B cell (primary cell): ENCODE measurements at regions of chr22 and their contacts with region 1.

Region 1: GRCh38 chr22:33018232-33018864 is 39.8 kb downstream of the SYN3 start:
- DNase-seq: peak; percentile 69
- ATAC-seq: peak; percentile 67
- H3K4me3 ChIP-seq: no peak overlapping the region
- H3K4me3 Mint-ChIP-seq: no peak overlapping the region
- H3K27ac ChIP-seq: no peak overlapping the region
- H3K27ac Mint-ChIP-seq: no peak overlapping the region
- H3K4me1 ChIP-seq: peaks cover 3 to 15% of the 10 kb centered on the region in 2 donors
- H3K4me1 Mint-ChIP-seq: peaks cover 9% of the 10 kb centered on the region
- H3K27me3 ChIP-seq: no peaks in the 10 kb centered on the region
- H3K27me3 Mint-ChIP-seq: no peaks in the 10 kb centered on the region
- CTCF ChIP-seq: peak; percentile 94

Region 2: GRCh38 chr22:33049119-33049729 is 30.9 kb after region 1 on chr22:
- CTCF ChIA-PET with region 1: interaction called, 31 read pairs
- POLR2A ChIA-PET with region 1: no interaction called
- intact Hi-C with region 1: loop called (anchors 1 kb)
- DNase-seq: peak; percentile 77
- ATAC-seq: peak; percentile 61
- H3K4me3 ChIP-seq: no peak overlapping the region
- H3K4me3 Mint-ChIP-seq: no peak overlapping the region
- H3K27ac ChIP-seq: no peak overlapping the region
- H3K27ac Mint-ChIP-seq: no peak overlapping the region
- H3K4me1 ChIP-seq: peaks cover 15 to 21% of the 10 kb centered on the region in 2 donors
- H3K4me1 Mint-ChIP-seq: peaks cover 17% of the 10 kb centered on the region
- H3K27me3 ChIP-seq: peaks cover 0 to 18% (median 10%) of the 10 kb centered on the region in 4 experiments
- H3K27me3 Mint-ChIP-seq: peaks cover 39% of the 10 kb centered on the region
- CTCF ChIP-seq: peak; percentile 99

Region 3: GRCh38 chr22:33202455-33202854 is 184.1 kb after region 1 on chr22:
- CTCF ChIA-PET with region 1: interaction called, 79 read pairs
- POLR2A ChIA-PET with region 1: no interaction called
- intact Hi-C with region 1: loop called (anchors 1 kb)
- DNase-seq: peak; percentile 22
- ATAC-seq: no peak
- H3K4me3 ChIP-seq: peak overlapping the region in 1 of 5 experiments; percentile 11
- H3K4me3 Mint-ChIP-seq: peak overlapping the region; percentile 10
- H3K27ac ChIP-seq: no peak overlapping the region
- H3K27ac Mint-ChIP-seq: no peak overlapping the region
- H3K4me1 ChIP-seq: peaks cover 29 to 36% of the 10 kb centered on the region in 2 donors
- H3K4me1 Mint-ChIP-seq: peaks cover 34% of the 10 kb centered on the region
- H3K27me3 ChIP-seq: no peaks in the 10 kb centered on the region
- H3K27me3 Mint-ChIP-seq: peaks cover 10% of the 10 kb centered on the region
- CTCF ChIP-seq: no peak

Region 4: GRCh38 chr22:33209930-33210784 is 191.8 kb after region 1 on chr22:
- CTCF ChIA-PET with region 1: interaction called, 79 read pairs
- POLR2A ChIA-PET with region 1: no interaction called
- intact Hi-C with region 1: loop called (anchors 1 kb)
- DNase-seq: peak; percentile 80
- ATAC-seq: peak; percentile 82
- H3K4me3 ChIP-seq: no peak overlapping the region
- H3K4me3 Mint-ChIP-seq: no peak overlapping the region
- H3K27ac ChIP-seq: no peak overlapping the region
- H3K27ac Mint-ChIP-seq: no peak overlapping the region
- H3K4me1 ChIP-seq: peaks cover 8 to 9% of the 10 kb centered on the region in 2 donors
- H3K4me1 Mint-ChIP-seq: peaks cover 16% of the 10 kb centered on the region
- H3K27me3 ChIP-seq: no peaks in the 10 kb centered on the region
- H3K27me3 Mint-ChIP-seq: peaks cover 5% of the 10 kb centered on the region
- CTCF ChIP-seq: peak; percentile 86

Region 5: DNA sequence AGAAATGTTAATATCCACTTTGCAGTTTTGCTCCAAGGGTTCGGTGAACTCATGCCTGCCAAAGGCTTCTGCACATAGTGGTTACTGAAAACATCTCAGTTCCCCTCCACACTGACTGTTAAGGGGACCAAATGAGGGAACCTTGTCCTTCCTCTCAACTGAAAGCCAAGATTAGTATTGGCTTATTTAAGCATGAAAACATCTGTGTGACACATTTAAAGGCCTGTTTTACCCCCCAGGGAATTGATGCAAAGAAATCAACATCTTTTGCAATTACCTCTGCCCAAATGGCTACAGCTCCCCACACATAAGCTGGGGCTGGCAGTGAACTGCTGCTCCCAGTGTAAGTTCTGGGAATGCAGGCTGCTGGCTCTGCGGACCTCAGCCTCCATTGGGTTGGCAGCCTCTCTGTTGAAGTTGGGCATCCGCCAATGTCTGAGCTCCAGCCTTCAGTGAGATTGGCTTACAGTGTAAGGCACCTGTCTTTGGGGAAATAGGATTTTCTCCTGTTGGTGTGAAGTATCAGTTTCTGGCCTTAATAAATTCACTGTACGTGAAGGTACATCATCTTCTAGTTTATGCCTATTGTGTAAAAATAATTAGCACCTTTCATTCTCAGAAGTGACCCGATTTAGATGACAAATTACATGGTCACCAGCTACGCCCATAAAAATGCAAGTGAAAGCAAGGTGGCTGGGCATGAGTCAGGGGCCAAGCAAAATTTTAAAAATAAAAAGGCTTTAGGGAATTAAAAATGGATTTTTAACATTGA is 253.2 kb after region 1 on chr22:
- CTCF ChIA-PET with region 1: interaction called, 49 read pairs
- POLR2A ChIA-PET with region 1: interaction called, 4 read pairs
- intact Hi-C with region 1: no loop called
- DNase-seq: peak; percentile 86
- ATAC-seq: peak; percentile 89
- H3K4me3 ChIP-seq: peak overlapping the region in 1 of 5 experiments; percentile 28
- H3K4me3 Mint-ChIP-seq: peak overlapping the region; percentile 74
- H3K27ac ChIP-seq: peak overlapping the region; percentile 84 to 91
- H3K27ac Mint-ChIP-seq: peak overlapping the region; percentile 88
- H3K4me1 ChIP-seq: peaks cover 74 to 79% of the 10 kb centered on the region in 2 donors
- H3K4me1 Mint-ChIP-seq: peaks cover 75% of the 10 kb centered on the region
- H3K27me3 ChIP-seq: no peaks in the 10 kb centered on the region
- H3K27me3 Mint-ChIP-seq: no peaks in the 10 kb centered on the region
- CTCF ChIP-seq: no peak

Region 6: DNA sequence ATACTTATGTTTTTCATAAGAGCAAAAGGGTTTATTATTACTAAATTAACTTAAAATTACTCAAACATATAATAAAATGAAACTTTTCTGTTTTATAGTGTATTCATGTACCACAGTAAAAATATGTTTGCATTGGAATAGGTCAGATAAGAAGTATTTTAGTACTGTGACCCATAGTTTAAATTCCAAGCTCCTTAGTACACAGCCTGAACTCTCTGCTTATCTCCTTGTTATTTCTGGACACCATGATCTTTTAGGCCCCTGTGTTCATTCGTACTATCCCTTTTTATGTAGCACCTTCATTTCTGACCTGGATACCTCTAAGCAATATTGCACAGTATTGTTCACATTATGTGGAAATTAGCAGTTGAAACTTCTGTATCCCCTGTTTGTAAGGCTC is 336.6 kb after region 1 on chr22:
- CTCF ChIA-PET with region 1: no interaction called
- POLR2A ChIA-PET with region 1: no interaction called
- intact Hi-C with region 1: no loop called
- DNase-seq: no peak
- ATAC-seq: no peak
- H3K4me3 ChIP-seq: no peak overlapping the region
- H3K4me3 Mint-ChIP-seq: no peak overlapping the region
- H3K27ac ChIP-seq: no peak overlapping the region
- H3K27ac Mint-ChIP-seq: no peak overlapping the region
- H3K4me1 ChIP-seq: no peaks in the 10 kb centered on the region
- H3K4me1 Mint-ChIP-seq: peaks cover 2% of the 10 kb centered on the region
- H3K27me3 ChIP-seq: no peaks in the 10 kb centered on the region
- H3K27me3 Mint-ChIP-seq: no peaks in the 10 kb centered on the region
- CTCF ChIP-seq: no peak